Endothelial cell of umbilical vein (primary cell): ENCODE measurements at regions of chr5 and their contacts with region 1.

Region 1: GRCh38 chr5:76771705-76772405 is 47.0 kb upstream of the F2RL1 start:
- DNase-seq: no peak
- H3K4me3 ChIP-seq: no peak overlapping the region
- H3K27ac ChIP-seq: no peak overlapping the region
- H3K4me1 ChIP-seq: peaks cover 6% of the 10 kb centered on the region
- H3K27me3 ChIP-seq: no peaks in the 10 kb centered on the region
- CTCF ChIP-seq: no peak
- POLR2A ChIP-seq: no peak

Region 2: GRCh38 chr5:76337953-76338451 is 433.9 kb before region 1 on chr5:
- CTCF ChIA-PET with region 1: no interaction called
- POLR2A ChIA-PET with region 1: no interaction called
- dilution Hi-C with region 1: no loop called
- intact Hi-C with region 1: loop called (anchors 1 kb)
- DNase-seq: peak; percentile 33
- H3K4me3 ChIP-seq: no peak overlapping the region
- H3K27ac ChIP-seq: no peak overlapping the region
- H3K4me1 ChIP-seq: no peaks in the 10 kb centered on the region
- H3K27me3 ChIP-seq: no peaks in the 10 kb centered on the region
- CTCF ChIP-seq: peak in 1 of 2 donors; percentile 24
- POLR2A ChIP-seq: no peak

Region 3: GRCh38 chr5:76601470-76601869 is 170.4 kb before region 1 on chr5:
- CTCF ChIA-PET with region 1: interaction called, 391 read pairs
- POLR2A ChIA-PET with region 1: no interaction called
- dilution Hi-C with region 1: no loop called
- intact Hi-C with region 1: loop called (anchors 1 kb)
- DNase-seq: peak; percentile 78
- H3K4me3 ChIP-seq: no peak overlapping the region
- H3K27ac ChIP-seq: no peak overlapping the region
- H3K4me1 ChIP-seq: peaks cover 4% of the 10 kb centered on the region
- H3K27me3 ChIP-seq: peaks cover 0 to 2% of the 10 kb centered on the region in 2 experiments
- CTCF ChIP-seq: peak; percentile 52
- POLR2A ChIP-seq: no peak

Region 4: GRCh38 chr5:76691467-76692138 is 80.3 kb before region 1 on chr5:
- CTCF ChIA-PET with region 1: interaction called, 41 read pairs
- POLR2A ChIA-PET with region 1: interaction called, 9 read pairs
- dilution Hi-C with region 1: no loop called
- intact Hi-C with region 1: no loop called
- DNase-seq: peak; percentile 98
- H3K4me3 ChIP-seq: no peak overlapping the region
- H3K27ac ChIP-seq: peak overlapping the region; percentile 91
- H3K4me1 ChIP-seq: peaks cover 79% of the 10 kb centered on the region
- H3K27me3 ChIP-seq: no peaks in the 10 kb centered on the region
- CTCF ChIP-seq: no peak
- POLR2A ChIP-seq: peak; percentile 43

Region 5: DNA sequence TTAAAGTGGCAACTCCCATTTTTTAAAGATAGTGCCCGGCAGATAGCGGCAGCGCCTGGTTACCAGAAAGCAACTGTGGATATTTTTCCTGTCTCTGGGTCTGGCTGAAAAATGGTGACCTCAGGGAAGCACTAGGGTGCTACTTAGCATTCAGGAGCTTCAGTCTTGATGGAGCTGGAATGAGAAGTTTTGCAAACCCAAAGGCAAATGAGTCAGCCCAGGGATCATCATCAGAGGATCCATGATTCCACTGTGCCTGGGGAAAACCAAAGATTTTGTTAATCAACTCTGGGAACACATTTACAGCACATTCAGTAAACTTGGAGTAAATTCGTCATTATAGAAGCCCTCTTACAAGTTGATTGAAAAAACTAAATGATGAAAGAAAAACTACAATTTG is 29.3 kb before region 1 on chr5:
- CTCF ChIA-PET with region 1: interaction called, 73 read pairs
- POLR2A ChIA-PET with region 1: no interaction called
- dilution Hi-C with region 1: no loop called
- intact Hi-C with region 1: loop called (anchors 5 kb)
- DNase-seq: no peak
- H3K4me3 ChIP-seq: no peak overlapping the region
- H3K27ac ChIP-seq: no peak overlapping the region
- H3K4me1 ChIP-seq: peaks cover 14% of the 10 kb centered on the region
- H3K27me3 ChIP-seq: no peaks in the 10 kb centered on the region
- CTCF ChIP-seq: no peak
- POLR2A ChIP-seq: no peak

Region 6: GRCh38 chr5:76813982-76814562 is 42.2 kb after region 1 on chr5:
- CTCF ChIA-PET with region 1: interaction called, 57 read pairs
- POLR2A ChIA-PET with region 1: no interaction called
- dilution Hi-C with region 1: no loop called
- intact Hi-C with region 1: loop called (anchors 2 kb)
- DNase-seq: peak; percentile 54
- H3K4me3 ChIP-seq: no peak overlapping the region
- H3K27ac ChIP-seq: peak overlapping the region; percentile 10
- H3K4me1 ChIP-seq: peaks cover 10% of the 10 kb centered on the region
- H3K27me3 ChIP-seq: no peaks in the 10 kb centered on the region
- CTCF ChIP-seq: no peak
- POLR2A ChIP-seq: no peak

Region 7: DNA sequence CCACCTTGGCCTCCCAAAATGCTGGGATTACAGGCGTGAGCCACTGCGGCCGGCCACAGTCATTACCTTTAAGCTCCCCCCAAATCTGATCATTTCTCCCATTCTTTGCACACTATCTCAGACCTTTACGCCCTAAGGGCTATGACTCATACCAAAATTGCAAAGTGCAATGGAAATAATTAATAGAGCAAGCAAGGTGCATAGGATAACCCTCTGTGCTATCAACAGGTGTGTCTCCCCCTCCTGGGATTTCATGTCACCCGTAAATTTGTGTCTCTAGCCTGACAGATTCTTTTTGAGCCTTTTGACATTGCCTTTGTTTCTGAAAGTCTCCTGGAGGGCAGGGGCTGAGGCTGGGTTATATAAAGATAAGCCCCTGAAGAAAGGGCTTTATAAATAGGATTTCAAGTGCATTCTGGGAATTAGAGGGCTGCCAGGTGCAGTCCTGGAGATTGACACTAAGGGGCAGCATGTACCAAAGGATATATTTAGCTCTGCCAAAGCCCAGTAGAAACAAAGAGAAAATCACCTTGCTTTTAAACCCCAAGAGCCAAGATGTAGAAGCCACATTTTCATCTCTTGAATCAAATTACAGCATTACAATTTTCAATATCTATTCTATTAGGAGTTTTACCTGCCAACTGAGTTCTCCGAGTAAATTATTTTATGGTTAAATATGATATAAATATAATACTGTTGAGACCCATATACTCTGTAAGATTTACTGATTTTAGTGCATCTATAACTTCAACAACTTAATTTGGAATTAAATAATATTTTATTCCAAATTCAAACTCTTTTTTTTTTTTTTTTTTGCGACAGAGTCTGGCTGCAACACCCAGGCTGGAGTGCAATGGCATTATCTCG is 96.2 kb after region 1 on chr5:
- CTCF ChIA-PET with region 1: interaction called, 15 read pairs
- POLR2A ChIA-PET with region 1: no interaction called
- dilution Hi-C with region 1: no loop called
- intact Hi-C with region 1: no loop called
- DNase-seq: peak; percentile 86
- H3K4me3 ChIP-seq: no peak overlapping the region
- H3K27ac ChIP-seq: no peak overlapping the region
- H3K4me1 ChIP-seq: no peaks in the 10 kb centered on the region
- H3K27me3 ChIP-seq: no peaks in the 10 kb centered on the region
- CTCF ChIP-seq: peak; percentile 71 to 79
- POLR2A ChIP-seq: no peak

Region 8: DNA sequence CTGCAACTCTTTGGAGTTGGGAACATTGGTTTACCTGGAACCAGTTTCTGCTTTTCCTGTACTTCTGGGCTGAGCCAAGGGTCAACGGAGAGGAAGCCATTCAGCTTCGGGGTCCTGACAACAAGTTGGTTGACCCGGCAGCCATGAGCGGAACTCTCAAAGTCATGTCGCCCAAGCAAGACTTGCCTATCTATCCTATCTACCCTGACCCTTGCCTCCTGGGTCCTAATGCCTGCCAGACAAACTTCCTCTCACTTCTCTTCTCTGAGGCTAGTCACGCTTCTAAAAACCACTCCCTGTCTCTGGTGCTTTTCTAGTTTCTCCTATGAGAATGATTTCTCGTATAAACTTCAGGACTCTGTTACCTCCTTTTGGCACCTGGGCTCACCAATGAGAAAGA is 136.3 kb after region 1 on chr5:
- CTCF ChIA-PET with region 1: no interaction called
- POLR2A ChIA-PET with region 1: no interaction called
- dilution Hi-C with region 1: no loop called
- intact Hi-C with region 1: no loop called
- DNase-seq: no peak
- H3K4me3 ChIP-seq: no peak overlapping the region
- H3K27ac ChIP-seq: no peak overlapping the region
- H3K4me1 ChIP-seq: no peaks in the 10 kb centered on the region
- H3K27me3 ChIP-seq: no peaks in the 10 kb centered on the region
- CTCF ChIP-seq: no peak
- POLR2A ChIP-seq: no peak